CD4-positive, alpha-beta T cell (primary cell): ENCODE measurements at regions of chr10 and their contacts with region 1.

Region 1: DNA sequence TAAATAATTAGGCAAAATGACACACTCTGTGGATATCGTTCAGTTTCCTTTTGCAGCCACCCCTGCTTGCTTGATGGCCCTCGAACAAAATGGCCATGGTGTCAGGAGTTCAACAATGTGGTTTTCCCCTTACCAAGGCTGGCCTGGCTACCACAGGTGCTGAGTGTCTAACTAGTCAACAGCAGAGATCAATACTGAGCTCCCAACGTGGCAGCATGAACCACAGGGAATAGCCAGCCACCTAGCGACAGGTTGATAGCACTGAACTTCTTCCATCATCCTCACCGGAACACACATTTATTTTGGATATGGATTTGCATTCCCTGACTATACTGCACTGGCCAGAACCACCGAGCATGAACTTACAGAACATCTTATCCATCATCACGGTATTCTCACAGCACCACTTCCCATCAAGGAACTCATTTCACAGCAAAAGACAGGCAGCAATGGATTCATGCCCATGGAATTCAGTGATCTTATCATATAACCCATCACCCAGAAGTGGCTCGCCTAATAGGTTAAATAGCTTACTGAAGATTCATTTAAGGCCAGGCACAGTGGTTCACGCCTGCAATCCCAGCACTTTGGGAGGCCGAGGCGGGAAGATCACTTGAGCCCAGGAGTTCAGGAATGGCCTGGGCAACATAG is 6.3 kb downstream of the C10orf67 start:
- DNase-seq: no peak
- ATAC-seq: no peak
- H3K4me3 ChIP-seq: no peak overlapping the region
- H3K4me3 Mint-ChIP-seq: no peak overlapping the region
- H3K27ac ChIP-seq: no peak overlapping the region
- H3K27ac Mint-ChIP-seq: no peak overlapping the region
- H3K4me1 ChIP-seq: peaks cover 20% of the 10 kb centered on the region
- H3K4me1 Mint-ChIP-seq: peaks cover 31% of the 10 kb centered on the region
- H3K27me3 ChIP-seq: no peaks in the 10 kb centered on the region
- H3K27me3 Mint-ChIP-seq: no peaks in the 10 kb centered on the region
- CTCF ChIP-seq: no peak

Region 2: GRCh38 chr10:23362879-23363792 is 24.8 kb after region 1 on chr10:
- CTCF ChIA-PET with region 1: interaction called, 3 read pairs
- POLR2A ChIA-PET with region 1: interaction called, 6 read pairs
- intact Hi-C with region 1: loop called in 1 of 2 experiments (anchors 1 kb)
- DNase-seq: peak in 11 of 14 experiments; percentile 25 to 83 (median 38)
- ATAC-seq: peak; percentile 84
- H3K4me3 ChIP-seq: peak overlapping the region; percentile 36
- H3K4me3 Mint-ChIP-seq: peak overlapping the region; percentile 79
- H3K27ac ChIP-seq: peak overlapping the region; percentile 68 to 72
- H3K27ac Mint-ChIP-seq: peak overlapping the region; percentile 80
- H3K4me1 ChIP-seq: peaks cover 43% of the 10 kb centered on the region
- H3K4me1 Mint-ChIP-seq: peaks cover 44% of the 10 kb centered on the region
- H3K27me3 ChIP-seq: no peaks in the 10 kb centered on the region
- H3K27me3 Mint-ChIP-seq: no peaks in the 10 kb centered on the region
- CTCF ChIP-seq: no peak

Region 3: GRCh38 chr10:23540401-23541030 is 202.2 kb after region 1 on chr10:
- CTCF ChIA-PET with region 1: no interaction called
- POLR2A ChIA-PET with region 1: no interaction called
- intact Hi-C with region 1: no loop called
- DNase-seq: peak in 5 of 14 experiments; percentile 17 to 46 (median 31)
- ATAC-seq: peak; percentile 58
- H3K4me3 ChIP-seq: no peak overlapping the region
- H3K4me3 Mint-ChIP-seq: peak overlapping the region; percentile 27
- H3K27ac ChIP-seq: peak overlapping the region; percentile 24 to 50
- H3K27ac Mint-ChIP-seq: peak overlapping the region; percentile 92
- H3K4me1 ChIP-seq: peaks cover 16% of the 10 kb centered on the region
- H3K4me1 Mint-ChIP-seq: peaks cover 57% of the 10 kb centered on the region
- H3K27me3 ChIP-seq: no peaks in the 10 kb centered on the region
- H3K27me3 Mint-ChIP-seq: no peaks in the 10 kb centered on the region
- CTCF ChIP-seq: no peak